Activated CD4-positive, alpha-beta T cell treated with anti-CD3 and anti-CD28 coated beads for 36 hours (primary cell): ENCODE measurements at regions of chr1 and their contacts with region 1.

Region 1: DNA sequence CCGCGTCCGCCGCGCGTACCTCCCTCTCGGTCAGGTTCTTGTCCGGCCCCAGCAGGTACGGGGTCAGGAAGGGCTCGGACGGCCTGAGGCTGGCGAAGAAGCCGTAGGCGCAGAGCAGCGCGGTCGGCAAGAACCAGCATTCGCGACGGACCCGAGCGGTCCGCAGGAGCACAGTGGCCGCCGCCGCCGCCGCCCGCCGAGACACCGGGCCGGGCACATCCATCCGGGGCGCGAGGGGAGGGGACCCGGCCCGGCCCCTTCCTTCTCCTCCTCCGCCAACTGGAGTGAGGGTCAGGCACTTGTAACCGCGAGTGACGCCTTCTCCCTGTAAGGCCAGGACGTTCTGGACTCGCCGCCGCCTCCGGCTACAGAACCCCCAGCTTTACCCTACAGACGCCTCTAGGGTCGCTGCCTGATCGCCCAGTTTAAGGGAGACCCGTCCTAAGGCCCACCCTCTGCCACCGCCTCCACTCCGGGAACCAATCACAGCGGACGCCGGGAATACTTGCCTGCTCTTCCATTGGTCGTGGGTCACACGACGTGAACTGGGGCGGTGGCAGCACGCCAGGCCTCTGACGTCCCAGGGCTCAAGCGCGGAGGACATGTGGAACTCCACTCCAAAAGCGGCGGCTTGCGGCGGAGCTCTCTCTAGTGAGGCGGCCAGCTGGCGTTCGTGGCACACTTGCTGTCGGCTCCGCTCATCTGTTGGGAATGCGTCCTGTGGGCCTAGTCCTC is at the start of gene SLC19A2:
- DNase-seq: peak; percentile 96
- ATAC-seq: peak; percentile 99
- H3K4me3 Mint-ChIP-seq: peak within 1 kb of the TSS; percentile 93
- H3K27ac Mint-ChIP-seq: peak within 1 kb of the TSS; percentile 94
- H3K4me1 Mint-ChIP-seq: peaks cover 48% of the 10 kb centered on the region
- H3K27me3 Mint-ChIP-seq: peaks cover 1% of the 10 kb centered on the region
- total RNA-seq, gene SLC19A2: 4.0 to 4.4 TPM

Region 2: DNA sequence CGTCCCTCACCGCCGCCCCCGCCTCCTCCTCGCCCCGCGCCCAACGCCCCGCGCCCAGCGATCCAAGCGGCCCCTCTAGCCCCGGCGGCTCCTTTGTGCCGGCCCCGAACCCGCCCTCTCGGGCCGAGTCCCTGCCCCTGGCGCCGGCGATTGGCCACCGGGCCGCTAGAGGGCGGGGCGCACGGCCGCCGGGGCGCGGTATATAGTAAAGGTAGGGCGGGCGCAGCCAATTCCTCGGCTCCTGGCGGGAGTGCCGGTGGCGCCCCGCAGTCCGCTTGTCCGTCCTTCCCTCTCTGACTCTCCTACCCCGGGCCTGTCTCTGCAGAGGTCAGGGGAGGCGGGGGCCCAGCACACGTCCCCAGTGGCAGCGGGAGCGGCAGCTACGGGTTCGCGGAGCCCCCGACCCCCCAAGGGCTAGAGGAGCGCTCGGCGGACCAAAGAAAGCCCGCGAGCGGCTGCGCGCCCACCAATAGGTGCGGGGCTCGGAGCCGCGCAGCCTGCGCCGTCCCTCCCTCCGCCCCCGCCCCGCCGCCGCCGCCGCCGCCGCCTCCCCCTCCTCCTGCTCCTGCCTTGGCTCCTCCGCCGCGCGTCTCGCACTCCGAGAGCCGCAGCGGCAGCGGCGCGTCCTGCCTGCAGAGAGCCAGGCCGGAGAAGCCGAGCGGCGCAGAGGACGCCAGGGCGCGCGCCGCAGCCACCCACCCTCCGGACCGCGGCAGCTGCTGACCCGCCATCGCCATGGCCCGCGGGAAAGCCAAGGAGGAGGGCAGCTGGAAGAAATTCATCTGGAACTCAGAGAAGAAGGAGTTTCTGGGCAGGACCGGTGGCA is 379.4 kb before region 1 on chr1 and contains the start of gene ATP1B1:
- CTCF ChIA-PET with region 1: no interaction called
- POLR2A ChIA-PET with region 1: interaction called, 4 read pairs
- intact Hi-C with region 1: loop called in 1 of 2 experiments (anchors 5 kb)
- DNase-seq: peak; percentile 88
- ATAC-seq: peak; percentile 91
- H3K4me3 Mint-ChIP-seq: peak within 1 kb of the TSS; percentile 78
- H3K27ac Mint-ChIP-seq: peak within 1 kb of the TSS; percentile 63
- H3K4me1 Mint-ChIP-seq: peaks cover 41% of the 10 kb centered on the region
- H3K27me3 Mint-ChIP-seq: peaks cover 18% of the 10 kb centered on the region
- total RNA-seq, gene ATP1B1: 2.9 to 3.3 TPM

Region 3: GRCh38 chr1:169390303-169390702 is 95.4 kb before region 1 on chr1:
- CTCF ChIA-PET with region 1: no interaction called
- POLR2A ChIA-PET with region 1: interaction called, 4 read pairs
- intact Hi-C with region 1: loop called in 1 of 2 experiments (anchors 1 kb)
- DNase-seq: no peak
- ATAC-seq: peak; percentile 92
- H3K4me3 Mint-ChIP-seq: no peak overlapping the region
- H3K27ac Mint-ChIP-seq: no peak overlapping the region
- H3K4me1 Mint-ChIP-seq: peaks cover 12% of the 10 kb centered on the region
- H3K27me3 Mint-ChIP-seq: no peaks in the 10 kb centered on the region

Region 4: DNA sequence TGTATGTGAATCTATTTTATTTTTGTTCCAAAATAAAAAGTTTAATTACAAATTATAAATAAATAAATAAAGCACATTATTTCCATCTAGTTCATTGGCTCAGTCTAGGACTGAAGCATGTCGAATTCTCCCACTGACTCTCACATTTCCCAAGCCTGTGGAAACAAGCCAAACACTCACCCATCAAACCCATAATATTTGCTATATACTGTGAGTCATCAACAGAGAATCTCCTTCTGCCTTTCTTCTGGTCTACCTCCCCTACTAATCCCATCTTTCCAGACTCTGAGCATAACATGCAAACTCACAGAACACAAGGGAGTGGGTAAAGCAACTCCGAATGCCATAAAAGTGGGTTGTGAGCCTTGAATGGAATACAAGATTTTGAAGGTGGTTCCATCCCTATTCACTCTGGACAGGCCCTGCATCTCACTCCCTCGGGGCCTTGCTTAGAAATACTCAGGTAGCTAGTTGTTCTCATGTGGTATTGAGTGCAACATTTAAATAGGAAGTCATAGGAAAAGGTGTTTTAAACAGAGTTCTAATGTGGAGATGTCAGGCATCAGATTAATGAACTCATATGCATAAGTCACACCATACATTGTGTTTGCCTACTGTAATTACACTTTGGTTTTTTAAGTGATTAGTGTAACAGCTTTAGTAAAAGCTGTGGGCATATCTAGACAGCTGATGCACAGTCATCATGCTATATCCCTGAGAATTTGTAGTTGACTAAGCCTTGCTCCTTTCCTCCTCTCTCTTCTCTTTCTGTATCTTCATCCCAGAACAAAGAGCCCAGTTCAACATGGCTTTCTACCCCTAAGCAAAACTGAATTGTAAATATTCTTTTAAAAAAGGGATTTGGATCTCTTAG is 53.5 kb after region 1 on chr1:
- CTCF ChIA-PET with region 1: no interaction called
- POLR2A ChIA-PET with region 1: no interaction called
- intact Hi-C with region 1: no loop called
- DNase-seq: no peak
- ATAC-seq: no peak
- H3K4me3 Mint-ChIP-seq: no peak overlapping the region
- H3K27ac Mint-ChIP-seq: no peak overlapping the region
- H3K4me1 Mint-ChIP-seq: peaks cover 2% of the 10 kb centered on the region
- H3K27me3 Mint-ChIP-seq: no peaks in the 10 kb centered on the region

Region 5: GRCh38 chr1:169586395-169587255 is 100.9 kb after region 1 on chr1 and contains the start of gene F5:
- CTCF ChIA-PET with region 1: interaction called, 3 read pairs
- POLR2A ChIA-PET with region 1: no interaction called
- intact Hi-C with region 1: loop called (anchors 2 kb)
- DNase-seq: peak; percentile 92
- ATAC-seq: peak; percentile 87
- H3K4me3 Mint-ChIP-seq: peak within 1 kb of the TSS; percentile 95
- H3K27ac Mint-ChIP-seq: peak within 1 kb of the TSS; percentile 97
- H3K4me1 Mint-ChIP-seq: peaks cover 65% of the 10 kb centered on the region
- H3K27me3 Mint-ChIP-seq: no peaks in the 10 kb centered on the region
- total RNA-seq, gene F5: 49.8 to 57.8 TPM

Region 6: DNA sequence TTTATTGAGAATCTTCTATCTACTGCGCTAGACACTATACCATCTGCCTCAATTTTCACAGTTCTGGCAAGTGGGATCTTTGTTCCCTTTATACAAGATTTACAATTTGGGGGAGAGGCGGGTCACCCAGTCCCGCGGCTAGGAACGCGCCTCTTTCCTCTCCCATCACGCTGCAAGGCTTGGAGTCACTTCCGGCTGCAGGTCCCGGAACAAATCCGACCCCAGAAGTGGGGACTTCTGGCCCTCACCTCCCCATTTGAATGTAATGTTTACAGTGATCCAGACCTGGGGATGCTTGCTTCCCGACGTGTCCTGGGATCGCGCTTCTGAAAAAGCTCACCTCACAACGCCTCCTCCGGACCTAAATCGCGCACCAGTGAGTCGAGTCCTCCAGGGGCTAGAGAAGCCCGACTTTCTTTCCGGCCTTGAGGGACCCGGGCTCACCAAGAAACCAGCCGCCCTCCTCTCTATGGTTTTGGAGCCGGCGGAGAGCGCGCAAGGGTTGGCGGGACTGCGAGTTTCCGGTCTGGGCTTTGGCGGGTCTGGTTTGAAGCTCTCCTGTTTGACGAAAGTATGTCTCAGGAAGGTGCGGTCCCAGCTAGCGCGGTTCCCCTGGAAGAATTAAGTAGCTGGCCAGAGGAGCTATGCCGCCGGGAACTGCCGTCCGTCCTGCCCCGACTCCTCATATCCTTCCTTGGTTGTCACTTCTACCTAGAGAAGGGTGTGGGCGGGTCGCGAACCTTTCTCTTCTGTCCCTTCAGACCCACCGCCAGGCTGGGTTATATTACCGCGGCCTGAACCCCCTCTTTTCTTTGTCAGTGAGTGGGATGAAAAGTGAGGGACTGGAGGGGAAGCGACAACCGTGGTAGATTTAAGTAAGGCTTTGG is 309.1 kb after region 1 on chr1 and contains the start of gene METTL18:
- CTCF ChIA-PET with region 1: interaction called, 6 read pairs
- POLR2A ChIA-PET with region 1: no interaction called
- intact Hi-C with region 1: loop called in 1 of 2 experiments (anchors 1 kb)
- DNase-seq: peak; percentile 96
- ATAC-seq: peak; percentile 98
- H3K4me3 Mint-ChIP-seq: peak within 1 kb of the TSS; percentile 96
- H3K27ac Mint-ChIP-seq: peak within 1 kb of the TSS; percentile 98
- H3K4me1 Mint-ChIP-seq: peaks cover 46% of the 10 kb centered on the region
- H3K27me3 Mint-ChIP-seq: no peaks in the 10 kb centered on the region
- total RNA-seq, gene METTL18: 11.6 to 13.3 TPM